ENCODE measurements at regions of chr6 and their contacts with region 1.

Region 1: DNA sequence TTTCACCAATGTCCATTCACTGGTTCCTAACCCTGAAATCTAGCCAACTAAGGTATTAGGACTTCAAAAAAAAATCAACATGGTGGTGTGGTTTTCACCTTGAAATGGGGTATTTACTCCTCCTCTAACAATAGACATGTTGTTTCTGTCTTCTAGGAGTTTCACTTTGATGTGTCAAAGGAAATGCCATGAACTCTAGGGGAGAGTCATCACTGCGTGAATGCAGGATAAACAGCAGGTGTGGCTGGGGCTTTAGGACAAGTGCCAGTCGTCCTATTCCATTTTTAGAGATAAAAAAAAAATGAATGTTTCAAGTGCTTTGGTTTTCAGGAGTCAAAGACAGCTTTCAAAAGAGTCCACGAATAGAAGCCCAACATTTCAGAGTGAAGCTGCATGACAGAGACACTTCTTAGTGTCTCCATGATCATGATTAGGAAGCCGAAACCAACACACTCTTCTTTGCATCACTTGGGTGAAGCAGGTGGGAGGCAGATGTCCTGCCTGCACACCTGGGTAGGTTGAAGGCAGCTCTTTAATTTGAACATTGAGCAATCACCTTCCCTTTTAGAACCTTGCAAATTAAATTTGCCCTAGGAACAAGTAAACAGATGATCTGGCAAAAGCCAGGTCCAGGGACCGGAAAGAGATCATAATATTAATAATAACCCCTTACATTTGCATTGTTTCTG is 328.5 kb upstream of the PRDM1 start:
- DNase-seq: peak; percentile 76
- ATAC-seq: peak; percentile 95
- H3K4me3 ChIP-seq: no peak overlapping the region
- H3K27ac ChIP-seq: no peak overlapping the region
- H3K4me1 ChIP-seq: peaks cover 11% of the 10 kb centered on the region; the same call in 1 of the 2 replicates
- H3K27me3 ChIP-seq: no peaks in the 10 kb centered on the region; a peak in 1 of 4 replicates
- CTCF ChIP-seq: no peak
- EP300 ChIP-seq: peak; percentile 85 to 97
- POLR2A ChIP-seq: no peak
- RAD21 ChIP-seq: no peak

Region 2: GRCh38 chr6:105363100-105363754 is 394.4 kb before region 1 on chr6:
- CTCF ChIA-PET with region 1: no interaction called
- POLR2A ChIA-PET with region 1: no interaction called
- RAD21 ChIA-PET with region 1: no interaction called
- SMC1A ChIA-PET with region 1: no interaction called
- in situ Hi-C with region 1: no loop called
- intact Hi-C with region 1: no loop called
- DNase-seq: no peak
- ATAC-seq: no peak
- H3K4me3 ChIP-seq: no peak overlapping the region
- H3K27ac ChIP-seq: no peak overlapping the region
- H3K4me1 ChIP-seq: no peaks in the 10 kb centered on the region
- H3K27me3 ChIP-seq: no peaks in the 10 kb centered on the region
- CTCF ChIP-seq: peak in 2 of 3 experiments; percentile 4 to 21; a peak in 1 of 6 replicates
- EP300 ChIP-seq: no peak
- POLR2A ChIP-seq: no peak
- RAD21 ChIP-seq: peak; percentile 24; the same call in 1 of the 2 replicates

Region 3: DNA sequence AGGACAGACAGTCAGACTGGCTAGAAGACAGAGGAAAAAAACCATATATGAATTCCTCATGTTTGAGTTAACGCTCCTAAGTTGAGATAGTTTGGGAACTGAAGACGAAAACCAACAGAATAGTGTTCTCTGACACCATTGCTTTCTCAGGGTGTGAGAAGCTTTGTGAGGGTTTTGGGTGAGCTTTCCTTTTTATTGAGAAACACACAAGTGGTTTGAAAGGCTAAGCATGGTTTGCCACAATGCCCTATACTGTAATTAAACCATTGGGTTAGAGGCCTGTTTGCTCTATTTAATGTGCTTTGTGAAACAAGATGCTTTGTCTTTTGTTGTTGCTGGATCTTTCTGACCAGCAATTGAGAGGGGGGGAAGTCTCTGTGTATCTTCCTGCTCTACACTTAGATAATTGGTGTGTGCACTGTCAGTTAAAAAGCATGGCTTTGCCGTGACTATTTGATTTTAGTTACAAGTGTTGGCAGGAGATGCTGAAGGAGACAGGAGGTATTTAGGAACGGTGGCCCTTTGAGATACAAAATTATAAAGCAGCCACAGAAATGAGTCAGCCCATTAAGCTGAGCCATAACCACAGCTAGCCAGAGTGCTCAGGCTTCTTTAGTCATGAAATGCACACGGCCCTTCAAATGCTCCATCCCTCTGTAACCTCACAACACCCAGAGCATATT is 81.8 kb before region 1 on chr6:
- CTCF ChIA-PET with region 1: no interaction called
- POLR2A ChIA-PET with region 1: no interaction called
- RAD21 ChIA-PET with region 1: no interaction called
- SMC1A ChIA-PET with region 1: no interaction called
- in situ Hi-C with region 1: no loop called
- intact Hi-C with region 1: no loop called
- DNase-seq: no peak
- ATAC-seq: peak; percentile 81
- H3K4me3 ChIP-seq: no peak overlapping the region
- H3K27ac ChIP-seq: no peak overlapping the region
- H3K4me1 ChIP-seq: no peaks in the 10 kb centered on the region
- H3K27me3 ChIP-seq: no peaks in the 10 kb centered on the region
- CTCF ChIP-seq: no peak
- EP300 ChIP-seq: no peak
- POLR2A ChIP-seq: no peak
- RAD21 ChIP-seq: no peak

Region 4: GRCh38 chr6:105793130-105793529 is 35.5 kb after region 1 on chr6:
- CTCF ChIA-PET with region 1: no interaction called
- POLR2A ChIA-PET with region 1: no interaction called
- RAD21 ChIA-PET with region 1: interaction called, 3 read pairs
- SMC1A ChIA-PET with region 1: interaction called, 3 read pairs
- in situ Hi-C with region 1: no loop called
- intact Hi-C with region 1: loop called (anchors 5 kb)
- DNase-seq: no peak
- ATAC-seq: peak; percentile 46
- H3K4me3 ChIP-seq: no peak overlapping the region
- H3K27ac ChIP-seq: no peak overlapping the region
- H3K4me1 ChIP-seq: peaks cover 33% of the 10 kb centered on the region
- H3K27me3 ChIP-seq: 0 out of 4 replicates have a peak, but pooled peaks cover 0 to 2% of the 10 kb centered on the region in 2 experiments
- CTCF ChIP-seq: peak in 2 of 3 experiments; percentile 4 to 18; a peak in 1 of 6 replicates
- EP300 ChIP-seq: no peak
- POLR2A ChIP-seq: no peak
- RAD21 ChIP-seq: peak; percentile 31; the same call in 1 of the 2 replicates